ENCODE measurements at regions of chr2 and their contacts with region 1.

Region 1: DNA sequence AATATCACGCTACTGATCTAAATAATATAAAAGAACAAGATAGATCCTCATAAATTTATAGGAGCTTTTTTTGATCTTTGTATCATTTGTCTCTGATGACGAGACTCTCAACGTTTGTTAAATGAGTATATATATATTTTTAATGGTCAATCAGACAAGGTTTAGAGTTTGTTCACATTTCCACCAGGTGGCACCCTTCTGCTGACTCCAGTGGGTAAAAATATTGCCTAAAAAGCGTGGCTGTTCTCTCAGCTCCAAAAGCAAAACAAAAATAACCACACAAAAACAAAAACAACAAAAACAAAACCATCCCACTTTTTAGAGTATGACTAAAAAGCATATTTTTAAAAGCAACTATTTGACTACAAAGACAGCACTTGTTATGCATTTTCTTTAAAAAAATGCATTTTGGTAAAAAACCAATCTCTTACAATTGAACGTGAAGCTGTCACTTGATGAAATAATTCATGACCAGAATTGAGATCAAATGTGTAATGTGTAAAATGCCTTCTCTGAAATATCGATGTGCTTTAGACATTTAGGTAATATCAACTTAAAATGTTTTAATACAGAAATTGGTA is 723.2 kb downstream of the DPP10 start:
- DNase-seq: peak; percentile 63
- H3K4me3 Mint-ChIP-seq: no peak overlapping the region
- H3K27ac Mint-ChIP-seq: no peak overlapping the region
- H3K4me1 Mint-ChIP-seq: no peaks in the 10 kb centered on the region
- H3K27me3 Mint-ChIP-seq: no peaks in the 10 kb centered on the region
- CTCF ChIP-seq: peak; percentile 40

Region 2: DNA sequence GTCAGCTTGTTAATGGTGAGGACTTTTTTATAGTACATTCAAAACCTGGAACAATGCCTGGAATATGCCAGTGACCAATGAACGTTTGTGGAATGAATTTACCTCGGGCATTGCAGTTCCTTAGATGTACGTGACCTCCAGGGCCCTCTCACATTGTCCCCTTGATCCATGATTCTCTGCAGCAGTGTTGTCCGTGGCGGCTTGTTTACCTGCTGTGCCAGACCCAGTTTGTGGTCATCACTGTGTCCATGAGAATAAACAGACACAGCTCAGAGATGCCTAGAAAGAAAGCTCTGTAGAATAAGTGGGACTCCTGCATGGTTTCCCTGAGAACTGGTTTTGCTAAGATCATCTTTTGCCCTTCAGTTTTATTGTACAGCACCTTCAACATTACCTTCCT is 409.0 kb after region 1 on chr2:
- CTCF ChIA-PET with region 1: no interaction called
- POLR2A ChIA-PET with region 1: no interaction called
- intact Hi-C with region 1: no loop called
- DNase-seq: no peak
- H3K4me3 Mint-ChIP-seq: no peak overlapping the region
- H3K27ac Mint-ChIP-seq: no peak overlapping the region
- H3K4me1 Mint-ChIP-seq: no peaks in the 10 kb centered on the region
- H3K27me3 Mint-ChIP-seq: no peaks in the 10 kb centered on the region
- CTCF ChIP-seq: no peak

Region 3: GRCh38 chr2:115650827-115651226 is 485.2 kb after region 1 on chr2:
- CTCF ChIA-PET with region 1: no interaction called
- POLR2A ChIA-PET with region 1: interaction called, 4 read pairs
- intact Hi-C with region 1: loop called (anchors 10 kb)
- DNase-seq: peak; percentile 1
- H3K4me3 Mint-ChIP-seq: no peak overlapping the region
- H3K27ac Mint-ChIP-seq: peak overlapping the region; percentile 14
- H3K4me1 Mint-ChIP-seq: no peaks in the 10 kb centered on the region
- H3K27me3 Mint-ChIP-seq: no peaks in the 10 kb centered on the region
- CTCF ChIP-seq: no peak

Region 4: GRCh38 chr2:115921541-115921940 is 755.9 kb after region 1 on chr2:
- CTCF ChIA-PET with region 1: no interaction called
- POLR2A ChIA-PET with region 1: no interaction called
- intact Hi-C with region 1: loop called (anchors 10 kb)
- DNase-seq: no peak
- H3K4me3 Mint-ChIP-seq: no peak overlapping the region
- H3K27ac Mint-ChIP-seq: no peak overlapping the region
- H3K4me1 Mint-ChIP-seq: peaks cover 3% of the 10 kb centered on the region
- H3K27me3 Mint-ChIP-seq: no peaks in the 10 kb centered on the region
- CTCF ChIP-seq: no peak

Region 5: GRCh38 chr2:116094196-116094595 is 928.6 kb after region 1 on chr2:
- CTCF ChIA-PET with region 1: no interaction called
- POLR2A ChIA-PET with region 1: no interaction called
- intact Hi-C with region 1: loop called (anchors 10 kb)
- DNase-seq: peak; percentile 6
- H3K4me3 Mint-ChIP-seq: no peak overlapping the region
- H3K27ac Mint-ChIP-seq: no peak overlapping the region
- H3K4me1 Mint-ChIP-seq: no peaks in the 10 kb centered on the region
- H3K27me3 Mint-ChIP-seq: no peaks in the 10 kb centered on the region
- CTCF ChIP-seq: no peak

Region 6: DNA sequence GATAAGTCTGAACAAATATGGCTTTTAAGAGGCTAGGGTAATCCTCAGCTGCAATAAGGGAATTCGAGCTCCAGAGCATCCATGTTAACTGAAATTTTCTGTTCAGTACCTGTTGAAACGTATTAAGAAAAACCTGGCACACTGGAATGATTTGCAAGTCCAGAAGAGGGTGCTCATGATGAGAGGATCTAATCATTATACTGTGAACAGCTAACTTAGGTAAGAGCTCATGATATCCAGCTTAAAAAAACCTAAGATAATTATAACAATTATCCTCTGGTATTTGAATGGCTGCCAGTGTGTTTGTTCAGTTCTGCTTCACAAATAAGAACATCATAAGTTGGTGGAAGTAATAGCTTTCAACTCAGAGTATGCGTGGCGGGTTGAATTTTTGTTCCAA is 1530.6 kb after region 1 on chr2:
- CTCF ChIA-PET with region 1: no interaction called
- POLR2A ChIA-PET with region 1: no interaction called
- intact Hi-C with region 1: loop called (anchors 10 kb)
- DNase-seq: peak; percentile 33
- H3K4me3 Mint-ChIP-seq: no peak overlapping the region
- H3K27ac Mint-ChIP-seq: no peak overlapping the region
- H3K4me1 Mint-ChIP-seq: peaks cover 8% of the 10 kb centered on the region
- H3K27me3 Mint-ChIP-seq: no peaks in the 10 kb centered on the region
- CTCF ChIP-seq: peak; percentile 23

Measured in MCF 10A (cell line).